ENCODE measurements at regions of chr15 and their contacts with region 1.

Region 1: GRCh38 chr15:68559345-68560310 is 19.2 kb upstream of the CORO2B start:
- DNase-seq: peak; percentile 78 to 88 (median 86)
- H3K4me3 ChIP-seq: peak overlapping the region in 6 of 7 experiments; percentile 54 to 74 (median 66)
- H3K27ac ChIP-seq: no peak overlapping the region
- H3K4me1 ChIP-seq: peaks cover 0 to 16% (median 14%) of the 10 kb centered on the region in 4 experiments
- H3K27me3 ChIP-seq: peaks cover 0 to 23% (median 10%) of the 10 kb centered on the region in 5 experiments

Region 2: DNA sequence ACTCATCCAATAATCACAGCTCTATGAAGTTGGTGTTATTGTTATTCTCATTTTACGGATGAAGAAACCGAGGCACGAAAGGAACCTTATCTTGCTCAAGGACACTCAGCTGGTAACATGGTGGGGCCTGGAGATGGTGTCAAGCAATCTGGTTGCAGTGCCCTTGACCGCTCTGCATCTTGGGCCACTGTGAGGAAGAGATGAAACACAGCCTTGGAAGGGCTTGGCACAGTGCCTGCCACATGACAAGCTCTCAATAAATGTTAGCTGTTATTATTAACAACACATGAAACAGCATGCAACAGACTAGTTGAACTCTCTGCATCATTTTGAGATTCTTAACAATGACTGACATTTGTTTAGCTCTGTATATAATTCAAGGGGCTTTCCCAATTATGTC is 117.6 kb before region 1 on chr15:
- CTCF ChIA-PET with region 1: no interaction called
- POLR2A ChIA-PET with region 1: no interaction called
- DNase-seq: no peak
- H3K4me3 ChIP-seq: no peak overlapping the region
- H3K27ac ChIP-seq: no peak overlapping the region
- H3K4me1 ChIP-seq: no peaks in the 10 kb centered on the region
- H3K27me3 ChIP-seq: peaks cover 0 to 11% (median 8%) of the 10 kb centered on the region in 5 experiments

Region 3: GRCh38 chr15:68464448-68465090 is 95.1 kb before region 1 on chr15:
- CTCF ChIA-PET with region 1: no interaction called
- POLR2A ChIA-PET with region 1: no interaction called
- DNase-seq: no peak
- H3K4me3 ChIP-seq: no peak overlapping the region
- H3K27ac ChIP-seq: no peak overlapping the region
- H3K4me1 ChIP-seq: peaks cover 0 to 9% (median 2%) of the 10 kb centered on the region in 4 experiments
- H3K27me3 ChIP-seq: peaks cover 0 to 2% (median 0%) of the 10 kb centered on the region in 5 experiments

Region 4: DNA sequence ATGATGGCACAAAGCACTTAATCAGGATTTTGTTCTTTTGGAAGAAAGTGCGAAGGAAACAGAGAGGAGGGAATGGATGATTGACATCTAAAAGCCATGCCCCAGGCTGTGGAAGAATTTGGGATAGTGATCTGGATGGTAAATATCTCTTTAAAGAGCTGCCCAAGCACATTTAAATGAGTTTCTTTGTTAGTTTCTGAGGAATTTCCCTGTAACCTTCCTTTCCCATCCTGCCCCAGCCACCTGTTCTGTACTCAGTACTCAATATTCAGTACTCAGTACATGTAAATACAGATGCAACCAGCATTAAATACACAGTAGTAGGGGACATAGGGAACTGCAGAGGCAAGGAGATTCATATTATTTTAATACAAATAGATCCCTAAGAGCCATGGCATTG is 11.3 kb after region 1 on chr15:
- CTCF ChIA-PET with region 1: interaction called, 11 read pairs
- POLR2A ChIA-PET with region 1: interaction called, 3 read pairs
- DNase-seq: no peak
- H3K4me3 ChIP-seq: no peak overlapping the region
- H3K27ac ChIP-seq: no peak overlapping the region
- H3K4me1 ChIP-seq: no peaks in the 10 kb centered on the region
- H3K27me3 ChIP-seq: peaks cover 0 to 10% (median 3%) of the 10 kb centered on the region in 5 experiments